Cardiac septum (tissue), 1 donor: ENCODE measurements at regions of chr15 and their contacts with region 1.

Region 1: DNA sequence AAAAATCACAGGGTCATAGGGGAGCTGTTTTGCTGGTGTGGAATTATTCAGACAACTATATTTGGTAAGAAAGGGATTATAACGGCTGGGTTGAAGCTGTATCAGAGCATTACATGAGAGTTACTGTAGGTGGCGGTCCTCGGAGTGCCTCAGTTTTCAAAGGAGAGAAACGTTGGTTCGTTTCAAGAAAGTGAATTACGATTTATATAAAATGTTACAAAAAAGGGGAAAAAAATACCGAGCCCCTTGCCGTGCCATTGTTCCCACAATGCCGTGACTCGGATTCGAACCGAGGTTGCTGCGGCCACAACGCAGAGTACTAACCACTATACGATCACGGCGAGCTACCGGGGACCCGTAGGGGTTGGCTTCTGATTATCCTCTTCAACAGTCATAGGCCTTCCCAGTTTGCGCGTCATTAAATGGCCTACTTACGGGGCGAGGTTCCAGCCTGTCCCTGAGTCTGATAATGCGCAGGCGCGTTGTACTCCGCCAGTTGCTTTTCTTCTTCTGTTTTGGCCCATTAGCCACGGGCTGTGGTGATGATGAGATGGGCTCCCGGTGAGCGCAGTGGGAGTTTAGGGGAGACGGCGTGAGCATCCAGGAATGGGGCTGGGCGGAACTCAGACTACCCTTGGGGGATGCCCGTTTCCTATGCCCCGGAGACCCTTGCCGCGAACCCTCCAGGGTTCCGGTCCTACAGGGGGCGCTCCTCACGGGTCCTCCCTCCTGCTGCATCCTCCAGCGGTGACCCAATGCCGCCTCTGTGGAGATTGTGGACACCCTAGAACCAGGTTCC is 10.8 kb upstream of the SHF start:
- DNase-seq: peak; percentile 95

Region 2: DNA sequence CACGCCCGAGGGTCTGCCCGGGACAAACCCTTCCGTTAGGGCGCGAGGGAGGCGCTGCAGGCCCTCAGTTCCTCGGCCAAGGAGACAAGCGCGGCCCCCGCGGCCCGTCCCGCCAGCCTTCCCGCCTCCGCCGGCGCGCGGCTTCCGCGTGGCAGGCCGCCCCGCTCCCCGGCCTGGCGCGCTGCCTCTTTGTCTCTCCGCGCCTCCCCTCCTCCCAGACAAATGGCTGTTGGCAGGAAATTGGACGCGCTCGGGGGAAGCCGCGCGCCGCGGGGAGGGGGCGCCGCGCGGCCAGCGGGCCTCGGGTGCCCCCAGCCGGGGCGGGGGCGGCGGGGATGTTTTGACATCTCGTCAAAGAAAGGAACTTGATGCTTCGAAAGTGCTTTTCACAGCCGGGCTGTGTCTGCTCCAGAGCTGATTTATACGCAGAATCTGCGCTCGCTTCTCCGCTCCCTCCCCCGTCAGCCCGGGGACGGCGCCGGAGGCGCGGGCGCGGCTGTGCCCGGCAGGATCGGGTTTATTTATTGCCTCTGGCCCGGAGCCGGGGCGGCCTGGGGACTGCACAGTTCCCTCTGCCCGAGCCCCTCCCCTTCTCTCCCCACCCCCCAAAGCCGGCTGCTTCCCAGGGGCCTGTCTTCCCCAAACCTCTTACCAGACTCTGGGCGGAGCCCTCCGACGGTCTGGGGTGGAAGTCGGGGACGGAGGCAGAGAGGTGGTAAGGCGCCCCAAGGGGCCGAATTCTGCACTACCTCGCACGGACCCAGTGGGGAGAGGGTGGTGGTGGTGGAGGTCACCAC is 31.5 kb before region 1 on chr15:
- intact Hi-C with region 1: loop called (anchors 1 kb)
- DNase-seq: peak; percentile 93

Region 3: DNA sequence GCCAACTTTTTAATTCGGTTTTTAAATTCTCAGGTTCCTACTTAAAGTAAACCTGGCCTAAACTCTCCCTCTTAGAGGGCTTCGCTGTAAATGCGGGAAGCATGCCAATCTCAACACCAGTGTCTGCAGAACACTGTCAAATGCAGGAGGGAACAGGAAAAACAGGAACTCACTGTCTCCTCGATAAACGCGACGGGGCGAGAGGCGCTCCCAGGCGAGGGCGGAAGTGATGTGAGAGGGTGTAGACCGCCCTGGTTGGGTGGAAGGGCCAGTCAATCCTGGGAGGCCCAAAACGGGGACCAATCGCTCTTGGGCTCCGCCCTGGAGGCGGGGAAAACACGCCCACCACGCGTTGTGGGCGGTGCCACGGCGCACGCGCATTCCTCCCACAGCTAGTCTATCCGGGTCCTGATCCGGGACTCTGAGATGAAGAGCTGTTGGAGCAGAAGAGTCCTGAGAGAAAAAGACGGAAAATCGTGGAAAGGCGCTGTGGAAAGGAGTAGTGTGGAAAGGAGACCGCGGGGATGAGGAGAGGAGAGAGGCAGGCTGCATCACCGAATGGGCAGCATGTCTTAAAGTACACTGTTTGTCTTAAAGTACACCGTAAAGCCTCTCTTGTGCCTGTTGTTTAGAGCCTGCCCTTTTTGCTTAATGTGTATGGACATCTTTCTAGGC is 80.6 kb after region 1 on chr15:
- intact Hi-C with region 1: loop called (anchors 2 kb)
- DNase-seq: peak; percentile 98